Activated T-helper 2 cell treated with anti-CD3 and anti-CD28 coated beads, Interferon-gamma antibody, Interleukin-2, Interleukin-4, amounts not matched to agents 10 μg/mL and 5 μg/mL and 100 μg/mL, durations not matched to agents 14 hours and 24 hours and 36 hours (primary cell): ENCODE measurements at regions of chr1 and their contacts with region 1.

Region 1: GRCh38 chr1:169893494-169894362 is at the start of gene SCYL3:
- DNase-seq: peak; percentile 89
- H3K4me3 Mint-ChIP-seq: peak within 1 kb of the TSS; percentile 86
- H3K27ac Mint-ChIP-seq: peak within 1 kb of the TSS; percentile 98
- H3K4me1 Mint-ChIP-seq: peaks cover 48% of the 10 kb centered on the region
- H3K27me3 Mint-ChIP-seq: peaks cover 8% of the 10 kb centered on the region
- total RNA-seq, gene SCYL3: 9.5 and 10.2 TPM in 2 replicates

Region 2: GRCh38 chr1:169044971-169045370 is 848.8 kb before region 1 on chr1:
- intact Hi-C with region 1: loop called (anchors 5 kb)
- DNase-seq: no peak
- H3K4me3 Mint-ChIP-seq: peak overlapping the region; percentile 5
- H3K27ac Mint-ChIP-seq: peak overlapping the region; percentile 58
- H3K4me1 Mint-ChIP-seq: peaks cover 69% of the 10 kb centered on the region
- H3K27me3 Mint-ChIP-seq: no peaks in the 10 kb centered on the region

Region 3: GRCh38 chr1:169250022-169250421 is 643.7 kb before region 1 on chr1:
- intact Hi-C with region 1: no loop called
- DNase-seq: no peak
- H3K4me3 Mint-ChIP-seq: no peak overlapping the region
- H3K27ac Mint-ChIP-seq: no peak overlapping the region
- H3K4me1 Mint-ChIP-seq: no peaks in the 10 kb centered on the region
- H3K27me3 Mint-ChIP-seq: no peaks in the 10 kb centered on the region

Region 4: DNA sequence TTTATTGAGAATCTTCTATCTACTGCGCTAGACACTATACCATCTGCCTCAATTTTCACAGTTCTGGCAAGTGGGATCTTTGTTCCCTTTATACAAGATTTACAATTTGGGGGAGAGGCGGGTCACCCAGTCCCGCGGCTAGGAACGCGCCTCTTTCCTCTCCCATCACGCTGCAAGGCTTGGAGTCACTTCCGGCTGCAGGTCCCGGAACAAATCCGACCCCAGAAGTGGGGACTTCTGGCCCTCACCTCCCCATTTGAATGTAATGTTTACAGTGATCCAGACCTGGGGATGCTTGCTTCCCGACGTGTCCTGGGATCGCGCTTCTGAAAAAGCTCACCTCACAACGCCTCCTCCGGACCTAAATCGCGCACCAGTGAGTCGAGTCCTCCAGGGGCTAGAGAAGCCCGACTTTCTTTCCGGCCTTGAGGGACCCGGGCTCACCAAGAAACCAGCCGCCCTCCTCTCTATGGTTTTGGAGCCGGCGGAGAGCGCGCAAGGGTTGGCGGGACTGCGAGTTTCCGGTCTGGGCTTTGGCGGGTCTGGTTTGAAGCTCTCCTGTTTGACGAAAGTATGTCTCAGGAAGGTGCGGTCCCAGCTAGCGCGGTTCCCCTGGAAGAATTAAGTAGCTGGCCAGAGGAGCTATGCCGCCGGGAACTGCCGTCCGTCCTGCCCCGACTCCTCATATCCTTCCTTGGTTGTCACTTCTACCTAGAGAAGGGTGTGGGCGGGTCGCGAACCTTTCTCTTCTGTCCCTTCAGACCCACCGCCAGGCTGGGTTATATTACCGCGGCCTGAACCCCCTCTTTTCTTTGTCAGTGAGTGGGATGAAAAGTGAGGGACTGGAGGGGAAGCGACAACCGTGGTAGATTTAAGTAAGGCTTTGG is 99.0 kb before region 1 on chr1 and contains the start of gene METTL18:
- intact Hi-C with region 1: loop called (anchors 1 kb)
- DNase-seq: peak; percentile 92
- H3K4me3 Mint-ChIP-seq: peak within 1 kb of the TSS; percentile 92
- H3K27ac Mint-ChIP-seq: peak within 1 kb of the TSS; percentile 98
- H3K4me1 Mint-ChIP-seq: peaks cover 51% of the 10 kb centered on the region
- H3K27me3 Mint-ChIP-seq: no peaks in the 10 kb centered on the region
- total RNA-seq, gene METTL18: 8.9 and 10.9 TPM in 2 replicates

Region 5: DNA sequence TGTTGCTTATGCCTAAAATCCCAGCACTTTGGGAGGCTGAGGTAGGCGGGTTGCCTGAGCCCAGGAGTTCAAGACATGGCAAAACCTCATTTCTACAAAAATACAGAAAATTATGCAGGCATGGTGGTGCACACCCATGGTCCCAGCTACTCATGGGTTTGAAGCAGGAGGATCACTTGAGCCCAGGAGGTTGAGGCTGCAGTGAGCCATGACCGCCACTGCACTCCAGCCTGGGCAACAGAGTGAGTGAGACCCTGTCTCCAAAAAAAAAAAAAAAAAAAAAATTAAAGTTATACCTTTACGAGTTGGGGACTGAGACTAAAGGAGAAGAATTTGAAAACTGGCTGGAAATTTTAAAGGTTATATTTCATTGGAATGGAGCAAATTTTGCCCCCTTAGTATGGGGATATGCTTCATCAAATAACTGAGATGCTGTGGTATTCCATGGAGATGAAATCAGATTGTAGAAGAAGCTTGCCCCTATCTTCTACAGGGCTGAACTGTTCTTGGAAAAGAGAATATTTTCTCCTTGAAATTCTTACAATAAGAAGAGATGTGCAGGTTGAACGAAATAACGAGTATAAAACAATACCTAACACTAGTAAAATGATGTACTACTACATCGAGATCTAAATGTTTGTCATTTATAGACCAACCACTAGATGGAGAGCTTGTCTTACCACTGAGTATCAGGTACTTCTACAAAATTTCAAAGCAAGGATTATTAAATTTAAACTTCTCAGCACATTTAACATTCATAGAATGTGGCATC is 34.9 kb after region 1 on chr1:
- intact Hi-C with region 1: loop called (anchors 1 kb)
- DNase-seq: no peak
- H3K4me3 Mint-ChIP-seq: no peak overlapping the region
- H3K27ac Mint-ChIP-seq: no peak overlapping the region
- H3K4me1 Mint-ChIP-seq: peaks cover 13% of the 10 kb centered on the region
- H3K27me3 Mint-ChIP-seq: peaks cover 13% of the 10 kb centered on the region

Region 6: DNA sequence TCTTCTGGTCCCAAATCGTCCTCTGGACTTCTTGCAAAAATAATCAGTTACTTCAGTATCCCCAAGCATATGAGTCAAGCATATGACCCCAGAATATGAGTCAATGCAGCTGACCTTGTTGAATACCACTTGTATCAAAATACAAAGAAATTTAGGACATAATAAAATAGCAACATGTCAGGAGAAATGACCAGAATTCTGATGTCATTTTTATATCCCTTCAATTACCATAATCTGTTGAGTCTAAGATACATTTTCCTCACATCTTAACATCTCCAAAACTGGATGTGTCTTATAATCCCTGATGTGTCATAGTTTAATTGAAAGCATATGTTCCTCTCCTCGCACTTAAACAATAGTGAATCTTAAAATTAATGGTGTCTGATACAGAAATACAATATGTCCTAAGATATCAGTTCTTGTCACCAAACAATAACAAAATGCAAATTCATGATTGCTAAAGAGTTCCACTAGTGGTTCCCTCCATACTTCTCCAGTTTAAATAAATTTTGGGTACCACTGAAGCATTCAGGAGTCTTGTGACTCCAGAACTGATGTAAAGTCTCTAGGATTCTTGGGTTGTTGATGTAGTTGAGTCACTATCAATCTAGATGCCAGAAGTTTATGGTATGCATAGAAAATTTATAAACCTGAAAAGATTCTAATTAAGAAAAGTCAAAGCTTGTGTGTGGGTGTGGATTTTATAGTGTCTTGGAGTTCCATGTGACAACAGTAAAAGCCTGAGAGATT is 139.0 kb after region 1 on chr1:
- intact Hi-C with region 1: no loop called
- DNase-seq: no peak
- H3K4me3 Mint-ChIP-seq: no peak overlapping the region
- H3K27ac Mint-ChIP-seq: no peak overlapping the region
- H3K4me1 Mint-ChIP-seq: peaks cover 5% of the 10 kb centered on the region
- H3K27me3 Mint-ChIP-seq: no peaks in the 10 kb centered on the region

Region 7: GRCh38 chr1:170531758-170532657 is 638.3 kb after region 1 on chr1 and contains the start of gene GORAB:
- intact Hi-C with region 1: loop called (anchors 5 kb)
- DNase-seq: peak; percentile 84
- H3K4me3 Mint-ChIP-seq: no peak within 1 kb of the TSS
- H3K27ac Mint-ChIP-seq: no peak within 1 kb of the TSS
- H3K4me1 Mint-ChIP-seq: peaks cover 6% of the 10 kb centered on the region
- H3K27me3 Mint-ChIP-seq: peaks cover 12% of the 10 kb centered on the region
- total RNA-seq, gene GORAB: 10.1 and 12.3 TPM in 2 replicates

Region 8: DNA sequence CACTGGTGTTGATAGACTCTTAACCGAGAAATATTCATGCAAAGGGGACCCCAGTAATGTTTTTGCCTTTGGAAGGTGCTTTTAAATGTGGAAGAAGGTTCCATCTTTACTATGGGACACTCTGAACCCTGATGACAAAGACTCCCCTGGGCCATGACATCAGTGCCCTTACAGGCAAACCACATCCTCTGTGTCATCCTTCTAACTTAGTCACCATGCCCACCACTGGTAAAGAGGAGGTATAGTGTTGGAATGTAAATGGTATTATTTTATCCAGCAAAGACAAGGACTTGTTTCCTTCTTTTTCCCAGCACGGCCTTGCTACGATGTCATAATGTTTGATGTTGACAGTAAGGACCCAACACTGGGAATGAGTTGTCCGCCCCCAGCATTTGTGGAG is 1900.4 kb after region 1 on chr1:
- intact Hi-C with region 1: no loop called
- DNase-seq: peak; percentile 32
- H3K4me3 Mint-ChIP-seq: peak overlapping the region; percentile 28
- H3K27ac Mint-ChIP-seq: peak overlapping the region; percentile 92
- H3K4me1 Mint-ChIP-seq: peaks cover 20% of the 10 kb centered on the region
- H3K27me3 Mint-ChIP-seq: no peaks in the 10 kb centered on the region